ENCODE measurements at regions of chr9 and their contacts with region 1.

Region 1: GRCh38 chr9:133387425-133388079 is 11.4 kb downstream of the STKLD1 start:
- DNase-seq: no peak
- ATAC-seq: no peak
- H3K4me3 ChIP-seq: no peak overlapping the region
- H3K27ac ChIP-seq: no peak overlapping the region
- H3K4me1 ChIP-seq: no peaks in the 10 kb centered on the region
- H3K27me3 ChIP-seq: no peaks in the 10 kb centered on the region
- CTCF ChIP-seq: no peak
- POLR2A ChIP-seq: no peak

Region 2: DNA sequence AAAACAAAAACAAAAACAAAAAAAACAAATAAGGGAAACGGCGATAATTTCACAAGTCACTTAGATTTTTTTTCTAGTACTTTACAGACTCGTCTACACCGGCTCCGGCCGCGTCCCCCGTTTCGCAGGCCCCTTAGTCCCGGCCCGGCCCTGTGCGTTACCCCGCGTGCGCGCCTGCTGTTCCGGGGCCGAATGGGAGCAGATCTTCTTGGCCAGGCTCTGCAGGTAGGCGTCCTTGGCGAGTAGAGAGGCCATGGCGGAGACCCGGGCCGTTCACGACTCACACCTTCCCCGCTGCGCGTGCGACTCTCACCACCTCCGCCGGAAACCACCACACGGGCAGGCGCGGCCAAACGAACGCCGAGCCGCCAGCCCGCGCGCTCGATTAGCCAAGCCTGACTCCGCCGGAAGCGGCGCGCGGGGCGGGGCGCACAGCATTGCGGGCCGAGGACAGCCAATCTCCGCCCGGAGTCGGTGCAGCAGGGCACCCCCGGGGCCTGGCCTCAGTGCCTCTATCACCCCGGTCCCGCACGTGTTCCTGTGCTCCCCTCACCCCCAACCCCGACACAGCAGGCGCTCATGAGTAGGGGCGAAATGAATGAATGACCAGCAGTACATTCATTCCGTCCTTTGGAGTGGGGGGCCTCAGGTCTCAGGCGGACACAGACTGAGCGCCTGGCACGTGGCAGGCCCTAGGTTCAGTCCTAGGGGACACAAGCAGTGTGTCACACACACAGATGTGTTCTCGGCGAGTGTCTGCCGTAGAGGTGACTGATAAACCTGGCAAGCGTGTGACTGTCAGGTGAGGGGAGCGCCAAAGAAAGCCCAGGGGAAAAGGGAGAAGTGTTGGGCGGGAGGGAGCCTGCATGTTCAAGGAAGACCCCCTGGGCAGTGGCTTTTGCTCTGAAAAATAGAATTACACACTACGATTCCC is 51.4 kb before region 1 on chr9 and contains the start of gene SURF6:
- intact Hi-C with region 1: loop called in 1 of 2 experiments (anchors 10 kb)
- DNase-seq: peak; percentile 94
- ATAC-seq: peak; percentile 95 to 98 (median 97)
- H3K4me3 ChIP-seq: peak within 1 kb of the TSS; percentile 61 to 94 (median 66)
- H3K27ac ChIP-seq: peak within 1 kb of the TSS in 2 of 3 donors; percentile 24 to 63
- H3K4me1 ChIP-seq: peaks cover 0 to 12% (median 4%) of the 10 kb centered on the region in 4 donors
- H3K27me3 ChIP-seq: no peaks in the 10 kb centered on the region
- CTCF ChIP-seq: no peak
- POLR2A ChIP-seq: peak; percentile 63
- total RNA-seq, gene SURF6: 5.8 to 8.8 (median 7.6) TPM

Region 3: GRCh38 chr9:133449760-133450159 is 62.2 kb after region 1 on chr9:
- intact Hi-C with region 1: no loop called
- DNase-seq: peak in 2 of 3 donors; percentile 66 to 80
- ATAC-seq: peak; percentile 24 to 87 (median 52)
- H3K4me3 ChIP-seq: no peak overlapping the region
- H3K27ac ChIP-seq: no peak overlapping the region
- H3K4me1 ChIP-seq: peaks cover 0 to 13% (median 6%) of the 10 kb centered on the region in 4 donors
- H3K27me3 ChIP-seq: no peaks in the 10 kb centered on the region
- CTCF ChIP-seq: peak in 1 of 4 donors; percentile 4
- POLR2A ChIP-seq: no peak

Measured in right lobe of liver (tissue), 6 donors.